Motor neuron (in vitro differentiated cells): ENCODE measurements at regions of chr11 and their contacts with region 1.

Region 1: DNA sequence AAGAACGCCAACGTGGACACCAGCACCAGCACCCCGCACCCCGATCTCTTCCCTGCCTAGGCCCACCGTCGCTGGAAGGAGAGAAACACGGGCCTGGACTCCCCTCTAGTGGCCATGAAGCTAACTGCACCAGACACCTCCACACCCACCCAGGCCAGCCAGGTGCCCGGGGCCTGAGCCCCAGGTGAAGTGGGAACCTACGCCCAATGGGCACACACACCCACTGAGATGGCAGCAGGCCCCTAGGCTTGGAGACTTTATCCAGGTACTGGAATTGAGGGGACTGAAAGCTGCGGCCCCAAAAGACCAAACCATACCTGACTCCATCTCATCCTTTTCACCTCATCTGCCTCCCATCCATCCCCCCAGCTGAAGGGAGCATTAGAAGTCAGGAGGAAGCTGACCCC is 81.0 kb downstream of the BUD13 start:
- ATAC-seq: peak; percentile 62 to 91 (median 72)
- H3K4me3 ChIP-seq: no peak overlapping the region
- H3K27ac ChIP-seq: no peak overlapping the region
- H3K4me1 ChIP-seq: peaks cover 28 to 40% of the 10 kb centered on the region in 2 donors

Region 2: DNA sequence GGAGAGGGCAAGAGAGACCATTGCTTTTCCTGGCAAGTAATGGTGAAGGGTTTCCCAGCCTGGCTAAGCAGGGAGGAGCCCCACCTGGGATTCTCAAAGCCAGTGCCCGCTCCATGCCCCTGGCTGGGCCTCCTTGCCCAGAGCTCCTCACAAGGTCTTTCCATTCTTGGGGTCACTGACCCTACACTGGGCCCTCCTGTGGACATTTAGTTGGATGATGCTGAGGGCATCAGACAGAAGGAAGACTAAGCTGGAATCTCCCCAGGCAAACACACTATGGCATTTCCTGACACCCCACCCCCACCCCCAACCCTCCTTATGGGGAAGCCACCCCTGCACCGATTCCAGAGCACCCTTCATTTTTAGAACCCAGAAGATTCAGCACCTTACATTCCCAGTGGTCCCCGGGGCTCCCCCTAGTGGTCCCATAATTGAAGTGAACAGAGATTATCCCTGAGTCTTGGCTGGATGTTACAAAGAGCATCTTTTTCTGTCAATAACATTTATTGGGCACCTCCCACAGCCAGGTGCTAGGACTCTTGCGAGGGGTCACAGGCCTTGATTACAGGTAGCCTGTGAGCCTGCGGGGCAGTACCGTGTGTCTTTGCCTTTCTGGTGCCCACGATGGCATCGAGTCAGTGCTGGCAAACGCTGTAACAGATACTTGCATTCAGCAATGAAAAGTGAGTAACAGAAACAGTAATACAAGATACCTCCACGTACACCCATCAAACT is 467.5 kb before region 1 on chr11:
- in situ Hi-C with region 1: loop called in 1 of 9 experiments (anchors 25 kb)
- ATAC-seq: peak; percentile 19 to 79 (median 34)
- H3K4me3 ChIP-seq: no peak overlapping the region
- H3K27ac ChIP-seq: no peak overlapping the region
- H3K4me1 ChIP-seq: peaks cover 22 to 26% of the 10 kb centered on the region in 2 donors

Region 3: GRCh38 chr11:116420770-116421528 is 270.8 kb before region 1 on chr11:
- in situ Hi-C with region 1: no loop called
- ATAC-seq: peak; percentile 82 to 100 (median 96)
- H3K4me3 ChIP-seq: no peak overlapping the region
- H3K27ac ChIP-seq: peak overlapping the region; percentile 38 to 69
- H3K4me1 ChIP-seq: peaks cover 24 to 32% of the 10 kb centered on the region in 2 donors

Region 4: DNA sequence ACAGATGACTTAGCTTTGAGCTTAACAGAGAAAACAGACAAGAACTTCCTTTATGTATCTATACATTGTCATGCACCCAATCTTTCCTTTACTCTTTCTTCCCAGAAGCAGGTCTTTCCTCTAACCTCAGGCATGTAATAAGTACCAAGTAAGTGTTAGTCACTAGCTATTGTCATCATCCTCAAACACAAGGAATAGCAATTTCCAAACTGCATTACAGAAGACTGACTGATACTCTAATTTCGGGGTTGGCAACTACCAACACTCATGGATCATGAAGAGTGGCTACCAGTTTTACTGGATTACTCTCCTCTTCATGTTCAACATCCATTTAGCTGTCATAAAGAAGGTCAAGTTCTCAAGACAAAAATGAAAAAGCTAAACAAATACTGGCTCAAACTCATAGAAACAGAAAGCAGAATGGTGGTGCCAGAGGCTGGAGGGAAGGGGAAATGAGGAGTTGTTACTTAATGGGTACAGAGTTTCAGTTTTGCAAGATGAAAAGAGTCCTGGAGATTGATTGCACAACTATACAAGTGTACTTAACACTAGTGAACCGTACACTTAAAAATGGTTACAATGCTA is 294.8 kb after region 1 on chr11:
- in situ Hi-C with region 1: no loop called
- ATAC-seq: peak in 2 of 8 experiments; percentile 35 to 55
- H3K4me3 ChIP-seq: no peak overlapping the region
- H3K27ac ChIP-seq: no peak overlapping the region
- H3K4me1 ChIP-seq: peaks cover 12 to 20% of the 10 kb centered on the region in 2 donors

Region 5: DNA sequence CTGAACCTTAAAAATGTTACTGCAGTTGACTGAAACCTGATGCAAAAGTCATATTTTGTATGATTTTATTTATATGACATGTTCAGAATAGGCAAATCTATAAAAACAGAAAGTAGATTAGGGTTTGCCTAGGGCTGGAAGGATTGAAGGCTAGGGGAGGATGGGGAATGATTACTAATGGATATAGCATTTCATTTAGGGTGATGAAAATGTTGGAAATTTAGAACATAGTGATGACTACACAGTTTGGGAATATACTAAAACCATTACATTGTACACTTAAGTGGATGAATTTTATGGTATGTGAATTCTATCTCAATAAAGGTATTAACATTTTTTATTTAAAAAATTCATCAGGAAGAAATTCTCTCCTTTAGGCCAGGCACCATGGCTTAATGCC is 429.4 kb after region 1 on chr11:
- in situ Hi-C with region 1: no loop called
- ATAC-seq: no peak
- H3K4me3 ChIP-seq: no peak overlapping the region
- H3K27ac ChIP-seq: no peak overlapping the region
- H3K4me1 ChIP-seq: no peaks in the 10 kb centered on the region